Activated naive CD4-positive, alpha-beta T cell treated with anti-CD3 and anti-CD28 coated beads for 36 hours (primary cell): ENCODE measurements at regions of chr11 and their contacts with region 1.

Region 1: GRCh38 chr11:61733120-61733978 is 19.1 kb upstream of the MYRF start:
- DNase-seq: peak; percentile 90
- H3K4me3 Mint-ChIP-seq: no peak overlapping the region
- H3K27ac Mint-ChIP-seq: no peak overlapping the region
- H3K4me1 Mint-ChIP-seq: peaks cover 2% of the 10 kb centered on the region
- H3K27me3 Mint-ChIP-seq: no peaks in the 10 kb centered on the region

Region 2: GRCh38 chr11:61679893-61680621 is 53.3 kb before region 1 on chr11 and contains the start of gene DAGLA:
- CTCF ChIA-PET with region 1: interaction called, 37 read pairs
- intact Hi-C with region 1: loop called (anchors 1 kb)
- DNase-seq: peak; percentile 68
- H3K4me3 Mint-ChIP-seq: peak within 1 kb of the TSS; percentile 27
- H3K27ac Mint-ChIP-seq: no peak within 1 kb of the TSS
- H3K4me1 Mint-ChIP-seq: peaks cover 3% of the 10 kb centered on the region
- H3K27me3 Mint-ChIP-seq: peaks cover 6% of the 10 kb centered on the region
- total RNA-seq, gene DAGLA: 0.02 to 0.07 TPM

Region 3: GRCh38 chr11:61688365-61689163 is 44.8 kb before region 1 on chr11:
- CTCF ChIA-PET with region 1: interaction called, 31 read pairs
- intact Hi-C with region 1: loop called (anchors 1 kb)
- DNase-seq: no peak
- H3K4me3 Mint-ChIP-seq: no peak overlapping the region
- H3K27ac Mint-ChIP-seq: no peak overlapping the region
- H3K4me1 Mint-ChIP-seq: peaks cover 6% of the 10 kb centered on the region
- H3K27me3 Mint-ChIP-seq: peaks cover 7% of the 10 kb centered on the region

Region 4: GRCh38 chr11:61695917-61696316 is 37.4 kb before region 1 on chr11:
- CTCF ChIA-PET with region 1: interaction called, 12 read pairs
- intact Hi-C with region 1: loop called (anchors 1 kb)
- DNase-seq: peak; percentile 98
- H3K4me3 Mint-ChIP-seq: no peak overlapping the region
- H3K27ac Mint-ChIP-seq: no peak overlapping the region
- H3K4me1 Mint-ChIP-seq: peaks cover 28% of the 10 kb centered on the region
- H3K27me3 Mint-ChIP-seq: no peaks in the 10 kb centered on the region

Region 5: DNA sequence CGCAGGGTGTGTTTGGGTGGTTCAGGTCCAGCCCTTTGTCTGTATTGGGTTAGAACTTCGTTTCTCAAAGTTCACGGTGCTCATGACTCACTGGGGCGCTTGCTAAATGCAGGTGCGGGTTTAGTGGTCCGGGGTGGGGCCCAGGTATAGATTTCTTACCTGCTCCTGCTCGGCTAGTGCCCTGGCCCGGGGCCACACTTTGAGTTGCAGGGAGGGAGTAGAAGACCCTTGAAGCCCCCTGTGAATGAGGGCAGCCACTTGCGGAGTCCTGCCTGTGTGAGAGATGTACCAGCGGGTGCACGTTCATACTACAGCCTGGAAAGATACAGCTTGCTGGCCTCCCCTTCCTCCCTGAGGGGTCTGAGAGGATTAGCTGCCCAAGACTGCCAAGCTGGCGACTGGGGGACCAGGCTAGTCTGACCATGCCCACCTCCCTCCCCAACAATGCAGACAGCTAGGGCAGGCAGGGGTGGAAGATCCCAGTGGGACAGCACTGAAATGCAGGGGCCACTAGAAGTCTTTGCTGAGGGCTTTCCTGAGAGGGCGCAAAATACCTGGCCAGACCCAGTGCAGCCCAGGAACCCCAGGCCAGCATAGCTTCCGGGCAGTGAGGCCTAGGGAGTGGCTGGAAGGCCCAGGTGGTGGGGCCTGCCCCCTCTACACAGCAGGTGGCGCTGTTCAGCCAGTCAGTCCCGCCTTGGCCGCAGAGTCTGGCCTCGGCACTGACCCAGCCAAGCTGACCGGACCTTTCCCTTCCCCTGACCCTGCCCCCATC is 14.0 kb after region 1 on chr11:
- CTCF ChIA-PET with region 1: interaction called, 17 read pairs
- intact Hi-C with region 1: no loop called
- DNase-seq: peak; percentile 57
- H3K4me3 Mint-ChIP-seq: no peak overlapping the region
- H3K27ac Mint-ChIP-seq: no peak overlapping the region
- H3K4me1 Mint-ChIP-seq: peaks cover 4% of the 10 kb centered on the region
- H3K27me3 Mint-ChIP-seq: peaks cover 21% of the 10 kb centered on the region

Region 6: DNA sequence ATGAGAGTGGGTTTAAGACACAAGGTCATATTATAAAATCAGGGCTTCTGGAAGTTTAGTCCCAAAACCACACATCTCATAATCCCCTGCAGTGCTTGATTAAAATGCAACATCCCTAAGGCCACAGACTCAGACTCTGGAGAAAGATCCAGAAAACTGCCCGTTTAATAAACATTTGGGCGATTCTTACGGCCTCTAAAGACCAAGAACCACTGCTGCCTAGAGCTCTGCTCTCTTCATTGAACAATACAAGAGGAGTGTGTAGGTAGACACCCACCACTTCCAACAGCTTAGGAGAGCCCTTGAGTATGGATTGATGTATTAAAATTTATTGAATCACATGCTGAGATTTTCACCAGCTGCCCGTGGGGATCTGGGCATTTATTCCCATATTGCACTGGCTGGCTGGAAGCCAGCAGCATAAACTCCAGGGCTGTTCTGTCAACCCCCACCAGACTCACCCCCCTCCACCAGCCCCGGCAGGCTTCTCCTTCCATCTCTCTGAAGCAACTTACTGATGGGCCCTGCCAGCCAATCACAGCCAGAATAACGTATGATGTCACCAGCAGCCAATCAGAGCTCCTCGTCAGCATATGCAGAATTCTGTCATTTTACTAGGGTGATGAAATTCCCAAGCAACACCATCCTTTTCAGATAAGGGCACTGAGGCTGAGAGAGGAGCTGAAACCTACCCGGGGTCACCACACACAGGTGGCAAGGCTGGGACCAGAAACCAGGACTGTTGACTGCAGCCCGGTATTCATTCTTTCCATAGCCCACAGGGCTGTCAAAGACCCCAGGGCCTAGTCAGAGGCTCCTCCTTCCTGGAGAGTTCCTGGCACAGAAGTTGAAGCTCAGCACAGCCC is 216.1 kb after region 1 on chr11:
- CTCF ChIA-PET with region 1: no interaction called
- intact Hi-C with region 1: no loop called
- DNase-seq: peak; percentile 60
- H3K4me3 Mint-ChIP-seq: no peak overlapping the region
- H3K27ac Mint-ChIP-seq: no peak overlapping the region
- H3K4me1 Mint-ChIP-seq: peaks cover 7% of the 10 kb centered on the region
- H3K27me3 Mint-ChIP-seq: peaks cover 2% of the 10 kb centered on the region